Naive thymus-derived CD4-positive, alpha-beta T cell (primary cell): ENCODE measurements at regions of chr3 and their contacts with region 1.

Region 1: DNA sequence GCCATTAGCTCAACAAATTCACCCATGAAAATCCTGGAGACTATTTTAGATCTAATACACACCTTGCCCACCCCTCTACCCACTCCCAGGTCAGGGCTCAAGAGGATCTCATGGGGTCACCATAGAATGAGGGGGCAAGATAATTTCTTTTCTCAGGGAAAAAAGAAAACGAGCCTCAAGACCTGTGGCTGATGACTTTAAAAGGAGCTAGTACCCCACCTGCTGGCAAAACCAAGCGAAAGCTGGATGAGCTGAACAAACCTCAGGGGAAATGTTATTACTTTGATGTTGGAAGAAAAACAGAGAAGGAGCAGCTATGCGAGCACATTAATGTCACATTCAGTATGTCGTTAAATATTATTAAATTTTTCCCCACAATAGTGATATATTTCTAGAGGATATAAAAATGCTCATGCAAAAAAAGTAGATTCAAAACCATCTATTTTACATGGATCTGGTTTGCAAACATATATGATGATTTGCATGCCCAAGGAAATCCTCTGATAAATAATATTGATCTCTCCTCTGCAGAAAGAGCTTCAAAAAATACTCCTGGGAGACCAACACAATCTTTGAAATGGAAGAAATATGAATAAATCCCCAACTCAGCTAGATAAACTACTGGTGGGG is 37.7 kb downstream of the PLD1 start:
- DNase-seq: peak in 7 of 9 donors; percentile 6 to 55 (median 36)
- ATAC-seq: peak; percentile 58
- H3K4me3 ChIP-seq: no peak overlapping the region
- H3K4me3 Mint-ChIP-seq: no peak overlapping the region
- H3K27ac ChIP-seq: no peak overlapping the region
- H3K27ac Mint-ChIP-seq: no peak overlapping the region
- H3K4me1 ChIP-seq: no peaks in the 10 kb centered on the region
- H3K4me1 Mint-ChIP-seq: peaks cover 0 to 9% (median 0%) of the 10 kb centered on the region in 7 donors
- H3K27me3 ChIP-seq: no peaks in the 10 kb centered on the region
- H3K27me3 Mint-ChIP-seq: peaks cover 0 to 29% (median 0%) of the 10 kb centered on the region in 5 donors

Region 2: GRCh38 chr3:170961616-170962400 is 810.7 kb before region 1 on chr3:
- CTCF ChIA-PET with region 1: interaction called, 15 read pairs
- POLR2A ChIA-PET with region 1: no interaction called
- intact Hi-C with region 1: loop called (anchors 1 kb)
- DNase-seq: peak in 5 of 9 donors; percentile 4 to 20 (median 14)
- ATAC-seq: no peak
- H3K4me3 ChIP-seq: no peak overlapping the region
- H3K4me3 Mint-ChIP-seq: no peak overlapping the region
- H3K27ac ChIP-seq: no peak overlapping the region
- H3K27ac Mint-ChIP-seq: peak overlapping the region in 1 of 9 donors; percentile 23
- H3K4me1 ChIP-seq: no peaks in the 10 kb centered on the region
- H3K4me1 Mint-ChIP-seq: no peaks in the 10 kb centered on the region
- H3K27me3 ChIP-seq: no peaks in the 10 kb centered on the region
- H3K27me3 Mint-ChIP-seq: peaks cover 0 to 23% (median 19%) of the 10 kb centered on the region in 5 donors

Region 3: GRCh38 chr3:171049861-171050444 is 722.6 kb before region 1 on chr3:
- CTCF ChIA-PET with region 1: interaction called, 15 read pairs
- POLR2A ChIA-PET with region 1: interaction called, 3 read pairs
- intact Hi-C with region 1: loop called in 1 of 2 experiments (anchors 1 kb)
- DNase-seq: peak in 6 of 9 donors; percentile 8 to 36 (median 14)
- ATAC-seq: peak; percentile 67
- H3K4me3 ChIP-seq: no peak overlapping the region
- H3K4me3 Mint-ChIP-seq: no peak overlapping the region
- H3K27ac ChIP-seq: no peak overlapping the region
- H3K27ac Mint-ChIP-seq: no peak overlapping the region
- H3K4me1 ChIP-seq: no peaks in the 10 kb centered on the region
- H3K4me1 Mint-ChIP-seq: no peaks in the 10 kb centered on the region
- H3K27me3 ChIP-seq: no peaks in the 10 kb centered on the region
- H3K27me3 Mint-ChIP-seq: peaks cover 9 to 27% (median 13%) of the 10 kb centered on the region in 5 donors

Region 4: GRCh38 chr3:171162986-171163723 is 609.4 kb before region 1 on chr3:
- CTCF ChIA-PET with region 1: interaction called, 7 read pairs
- POLR2A ChIA-PET with region 1: no interaction called
- intact Hi-C with region 1: loop called in 1 of 2 experiments (anchors 1 kb)
- DNase-seq: peak in 7 of 9 donors; percentile 19 to 51 (median 47)
- ATAC-seq: peak; percentile 55
- H3K4me3 ChIP-seq: no peak overlapping the region
- H3K4me3 Mint-ChIP-seq: no peak overlapping the region
- H3K27ac ChIP-seq: no peak overlapping the region
- H3K27ac Mint-ChIP-seq: peak overlapping the region in 1 of 9 donors; percentile 56
- H3K4me1 ChIP-seq: no peaks in the 10 kb centered on the region
- H3K4me1 Mint-ChIP-seq: peaks cover 9 to 25% (median 19%) of the 10 kb centered on the region in 7 donors
- H3K27me3 ChIP-seq: no peaks in the 10 kb centered on the region
- H3K27me3 Mint-ChIP-seq: no peaks in the 10 kb centered on the region

Region 5: GRCh38 chr3:171614318-171614921 is 158.1 kb before region 1 on chr3:
- CTCF ChIA-PET with region 1: no interaction called
- POLR2A ChIA-PET with region 1: no interaction called
- intact Hi-C with region 1: loop called in 1 of 2 experiments (anchors 10 kb)
- DNase-seq: peak in 3 of 9 donors; percentile 1 to 22 (median 8)
- ATAC-seq: no peak
- H3K4me3 ChIP-seq: no peak overlapping the region
- H3K4me3 Mint-ChIP-seq: no peak overlapping the region
- H3K27ac ChIP-seq: no peak overlapping the region
- H3K27ac Mint-ChIP-seq: no peak overlapping the region
- H3K4me1 ChIP-seq: no peaks in the 10 kb centered on the region
- H3K4me1 Mint-ChIP-seq: no peaks in the 10 kb centered on the region
- H3K27me3 ChIP-seq: no peaks in the 10 kb centered on the region
- H3K27me3 Mint-ChIP-seq: peaks cover 0 to 39% (median 12%) of the 10 kb centered on the region in 5 donors

Region 6: DNA sequence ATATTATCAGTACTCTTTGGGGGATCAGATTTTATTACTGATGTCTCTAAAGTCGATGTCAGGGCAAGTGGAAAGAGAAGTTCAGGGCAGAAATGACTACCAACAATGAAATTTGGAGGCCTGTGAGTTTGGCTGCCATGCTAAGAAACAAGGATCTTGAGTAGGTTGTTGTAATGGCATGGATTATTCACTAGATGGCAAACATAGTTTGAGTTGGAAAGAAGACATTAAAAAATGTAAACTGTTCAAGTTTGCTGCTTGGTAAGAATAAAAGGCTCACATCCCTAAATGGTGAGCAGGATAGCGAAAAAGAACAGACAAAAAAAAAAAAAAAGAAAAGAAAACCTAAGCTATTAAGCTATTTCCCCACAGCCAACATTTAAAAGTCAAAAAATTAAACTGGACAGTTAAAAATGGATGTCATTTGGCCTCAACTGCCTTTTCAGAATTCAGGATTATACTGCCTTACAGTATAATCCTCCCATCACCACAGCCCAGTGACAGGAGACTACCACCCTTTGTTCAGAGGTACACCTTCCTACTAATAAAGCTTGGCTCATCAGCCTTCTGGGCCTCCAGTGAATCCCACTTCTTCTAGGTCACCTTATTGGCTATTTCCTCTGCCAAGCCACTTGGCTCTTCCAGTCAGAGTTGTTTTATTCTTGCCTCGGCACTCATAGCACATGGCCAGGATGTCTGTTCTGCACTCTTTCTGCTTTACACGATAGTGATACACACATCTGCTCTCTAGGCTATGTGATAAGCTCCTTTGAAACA is 126.0 kb before region 1 on chr3:
- CTCF ChIA-PET with region 1: no interaction called
- POLR2A ChIA-PET with region 1: no interaction called
- intact Hi-C with region 1: loop called in 1 of 2 experiments (anchors 5 kb)
- DNase-seq: peak in 5 of 9 donors; percentile 2 to 19 (median 11)
- ATAC-seq: peak; percentile 40
- H3K4me3 ChIP-seq: no peak overlapping the region
- H3K4me3 Mint-ChIP-seq: no peak overlapping the region
- H3K27ac ChIP-seq: no peak overlapping the region
- H3K27ac Mint-ChIP-seq: no peak overlapping the region
- H3K4me1 ChIP-seq: no peaks in the 10 kb centered on the region
- H3K4me1 Mint-ChIP-seq: no peaks in the 10 kb centered on the region
- H3K27me3 ChIP-seq: no peaks in the 10 kb centered on the region
- H3K27me3 Mint-ChIP-seq: peaks cover 0 to 2% (median 0%) of the 10 kb centered on the region in 5 donors

Region 7: GRCh38 chr3:172057059-172057458 is 284.5 kb after region 1 on chr3:
- CTCF ChIA-PET with region 1: no interaction called
- POLR2A ChIA-PET with region 1: no interaction called
- intact Hi-C with region 1: no loop called
- DNase-seq: no peak
- ATAC-seq: no peak
- H3K4me3 ChIP-seq: no peak overlapping the region
- H3K4me3 Mint-ChIP-seq: peak overlapping the region in 1 of 10 donors; percentile 22
- H3K27ac ChIP-seq: no peak overlapping the region
- H3K27ac Mint-ChIP-seq: peak overlapping the region in 2 of 9 donors; percentile 10 to 47
- H3K4me1 ChIP-seq: peaks cover 0 to 6% of the 10 kb centered on the region in 2 donors
- H3K4me1 Mint-ChIP-seq: peaks cover 32 to 59% (median 51%) of the 10 kb centered on the region in 7 donors
- H3K27me3 ChIP-seq: no peaks in the 10 kb centered on the region
- H3K27me3 Mint-ChIP-seq: no peaks in the 10 kb centered on the region